ENCODE measurements at regions of chr6 and their contacts with region 1.

Region 1: DNA sequence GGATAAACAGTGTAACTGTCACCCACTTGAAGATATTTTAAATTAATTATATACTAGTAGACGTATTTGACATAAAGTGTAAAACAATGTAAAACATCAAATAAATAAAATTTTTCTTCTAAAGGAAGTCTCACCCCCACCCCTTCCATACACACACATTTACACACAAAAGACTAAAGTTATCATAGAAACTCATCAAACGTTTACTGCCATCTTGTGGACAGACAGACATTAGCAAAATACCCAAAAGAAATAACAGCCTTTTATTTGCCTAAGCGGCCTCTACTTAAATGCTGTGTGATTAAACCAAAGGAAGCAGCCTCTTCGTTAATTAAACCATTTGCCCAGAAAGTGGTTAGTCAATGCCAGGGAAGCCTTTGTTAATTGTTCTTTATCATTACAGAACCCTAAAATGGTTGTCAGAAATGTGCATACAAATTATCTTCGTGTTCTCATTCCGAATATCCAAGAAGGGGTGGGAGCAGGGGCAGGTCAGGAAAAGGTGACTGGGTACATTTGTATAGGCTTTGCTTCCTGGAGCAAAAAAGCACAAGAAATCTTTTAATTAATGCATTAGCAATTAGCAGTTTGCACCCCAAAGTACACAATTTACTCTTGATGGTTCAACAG is 176.2 kb upstream of the SASH1 start:
- DNase-seq: no peak
- ATAC-seq: peak in 3 of 4 donors; percentile 51 to 69 (median 67)
- H3K4me3 ChIP-seq: no peak overlapping the region
- H3K27ac ChIP-seq: no peak overlapping the region
- H3K4me1 ChIP-seq: no peaks in the 10 kb centered on the region
- H3K27me3 ChIP-seq: no peaks in the 10 kb centered on the region
- CTCF ChIP-seq: peak; percentile 16 to 43 (median 35)

Region 2: DNA sequence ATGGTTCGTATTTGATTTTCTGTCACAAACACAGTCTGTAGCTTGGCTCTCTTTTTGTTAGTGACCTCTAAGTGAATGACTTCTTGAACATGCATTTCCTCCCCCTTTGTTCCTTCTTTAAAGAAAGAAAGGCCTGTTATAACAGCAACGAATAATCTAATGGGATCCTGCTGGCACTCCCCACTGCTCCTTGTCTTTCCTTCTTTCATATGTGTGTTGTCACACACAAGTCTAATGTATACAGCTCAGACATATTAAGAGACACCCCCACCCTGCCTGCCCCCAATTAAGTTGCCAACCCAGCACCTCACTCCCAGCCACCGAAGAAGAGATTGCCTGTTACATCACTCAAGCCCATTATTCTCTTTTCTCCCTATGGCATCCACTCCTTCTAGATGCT is 662.9 kb before region 1 on chr6:
- intact Hi-C with region 1: loop called in 1 of 3 experiments (anchors 5 kb)
- DNase-seq: no peak
- ATAC-seq: no peak
- H3K4me3 ChIP-seq: no peak overlapping the region
- H3K27ac ChIP-seq: no peak overlapping the region
- H3K4me1 ChIP-seq: peaks cover 0 to 7% (median 0%) of the 10 kb centered on the region in 3 donors
- H3K27me3 ChIP-seq: no peaks in the 10 kb centered on the region
- CTCF ChIP-seq: no peak

Region 3: GRCh38 chr6:148250975-148251685 is 84.7 kb after region 1 on chr6:
- intact Hi-C with region 1: loop called in 1 of 3 experiments (anchors 5 kb)
- DNase-seq: no peak
- ATAC-seq: peak; percentile 38 to 87 (median 78)
- H3K4me3 ChIP-seq: no peak overlapping the region
- H3K27ac ChIP-seq: no peak overlapping the region
- H3K4me1 ChIP-seq: peaks cover 4 to 7% (median 7%) of the 10 kb centered on the region in 3 donors
- H3K27me3 ChIP-seq: no peaks in the 10 kb centered on the region
- CTCF ChIP-seq: peak in 2 of 4 donors; percentile 22 to 24